Lower leg skin (tissue), 4 donors: ENCODE measurements at regions of chr20 and their contacts with region 1.

Region 1: DNA sequence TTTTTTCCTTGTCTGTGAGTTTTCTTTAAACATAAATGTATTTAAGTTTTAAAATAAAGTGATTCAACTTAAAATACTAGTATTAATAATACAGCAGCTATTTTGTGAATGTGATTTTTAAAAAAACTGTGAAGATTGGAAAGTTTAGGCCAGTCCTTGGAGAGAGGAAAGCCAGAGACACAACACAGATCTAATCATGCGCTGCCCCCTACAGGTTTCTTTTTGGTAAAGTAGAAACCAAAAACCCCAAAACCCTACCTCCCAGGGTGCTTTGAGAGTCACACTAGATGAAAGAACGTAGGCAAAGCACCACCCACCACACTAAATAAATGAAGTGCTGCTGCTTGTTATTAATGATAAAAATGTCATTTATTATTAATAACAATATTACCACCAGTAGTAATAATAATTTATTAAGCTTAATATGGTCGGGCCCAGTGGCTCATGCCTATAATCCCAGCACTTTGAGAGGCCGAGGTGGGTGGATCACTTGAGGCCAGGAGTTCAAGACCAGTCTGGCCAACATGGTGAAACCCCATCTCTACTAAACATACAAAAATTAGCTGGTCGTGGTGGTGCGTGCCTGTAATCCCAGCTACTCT is 33.7 kb downstream of the SLC9A8 start:
- DNase-seq: peak in 1 of 2 donors; percentile 33
- H3K4me3 ChIP-seq: no peak overlapping the region
- CTCF ChIP-seq: no peak
- POLR2A ChIP-seq: no peak

Region 2: GRCh38 chr20:49610701-49611538 is 235.4 kb before region 1 on chr20:
- intact Hi-C with region 1: loop called (anchors 5 kb)
- DNase-seq: peak; percentile 57 to 94
- H3K4me3 ChIP-seq: no peak overlapping the region
- CTCF ChIP-seq: peak in 2 of 3 donors; percentile 94 to 98
- POLR2A ChIP-seq: no peak

Region 3: GRCh38 chr20:50366270-50367103 is 520.2 kb after region 1 on chr20:
- intact Hi-C with region 1: no loop called
- DNase-seq: no peak
- H3K4me3 ChIP-seq: no peak overlapping the region
- CTCF ChIP-seq: peak in 1 of 3 donors; percentile 52
- POLR2A ChIP-seq: no peak